HCT116 (cell line): ENCODE measurements at regions of chr20 and their contacts with region 1.

Region 1: DNA sequence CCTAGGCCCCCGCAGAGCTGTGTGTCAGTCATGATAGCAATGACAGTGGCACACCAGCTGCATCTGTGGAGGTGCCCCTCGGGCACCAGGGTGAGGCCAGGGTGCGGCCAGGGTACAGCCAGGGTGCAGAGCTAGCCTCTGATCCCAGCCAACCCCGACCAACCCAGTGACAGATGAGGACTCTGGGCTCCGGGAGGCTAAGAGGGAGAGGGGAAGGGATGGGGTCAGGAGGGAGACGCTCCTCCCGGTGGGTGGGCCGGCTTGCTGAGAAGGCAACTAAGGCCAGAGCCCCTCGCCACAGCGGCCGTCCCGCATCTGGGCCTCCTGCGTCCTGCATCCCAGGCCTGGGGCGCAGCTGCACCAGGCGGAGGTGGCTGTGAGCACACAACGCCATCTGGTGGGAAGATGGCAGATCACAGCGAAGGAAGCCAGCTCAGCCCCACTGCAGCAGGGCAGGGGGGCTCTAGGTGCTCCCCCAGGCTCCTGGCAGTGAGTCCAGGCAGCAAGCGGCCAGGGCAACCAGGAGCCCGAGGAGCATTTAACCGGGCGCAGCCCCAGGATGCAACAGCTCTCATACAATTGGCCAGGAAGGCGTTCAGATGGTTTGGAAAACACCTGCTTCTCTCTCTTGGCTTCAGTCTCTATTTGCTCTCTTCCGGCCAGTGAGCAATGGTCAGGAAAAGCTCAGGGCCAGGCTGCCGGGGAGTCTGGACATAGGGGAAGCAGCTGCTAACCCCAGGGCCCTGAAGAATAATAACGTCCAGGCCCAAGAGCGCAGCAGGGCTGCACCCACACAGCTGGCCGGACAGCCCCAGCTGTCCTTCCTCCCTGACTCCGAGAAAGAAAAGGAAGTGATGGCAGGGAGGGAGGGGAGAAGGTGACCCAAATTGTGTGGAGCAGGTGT is 169.4 kb downstream of the TAF4 start:
- DNase-seq: peak; percentile 12
- ATAC-seq: peak; percentile 97
- H3K4me3 ChIP-seq: no peak overlapping the region
- H3K27ac ChIP-seq: no peak overlapping the region
- H3K4me1 ChIP-seq: no peaks in the 10 kb centered on the region
- H3K27me3 ChIP-seq: peaks cover 5% of the 10 kb centered on the region; the same call in 1 of the 2 replicates
- CTCF ChIP-seq: peak; percentile 44 to 82 (median 80); a peak in 5 of 6 replicates
- POLR2A ChIP-seq: no peak
- RAD21 ChIP-seq: peak; percentile 69

Region 2: DNA sequence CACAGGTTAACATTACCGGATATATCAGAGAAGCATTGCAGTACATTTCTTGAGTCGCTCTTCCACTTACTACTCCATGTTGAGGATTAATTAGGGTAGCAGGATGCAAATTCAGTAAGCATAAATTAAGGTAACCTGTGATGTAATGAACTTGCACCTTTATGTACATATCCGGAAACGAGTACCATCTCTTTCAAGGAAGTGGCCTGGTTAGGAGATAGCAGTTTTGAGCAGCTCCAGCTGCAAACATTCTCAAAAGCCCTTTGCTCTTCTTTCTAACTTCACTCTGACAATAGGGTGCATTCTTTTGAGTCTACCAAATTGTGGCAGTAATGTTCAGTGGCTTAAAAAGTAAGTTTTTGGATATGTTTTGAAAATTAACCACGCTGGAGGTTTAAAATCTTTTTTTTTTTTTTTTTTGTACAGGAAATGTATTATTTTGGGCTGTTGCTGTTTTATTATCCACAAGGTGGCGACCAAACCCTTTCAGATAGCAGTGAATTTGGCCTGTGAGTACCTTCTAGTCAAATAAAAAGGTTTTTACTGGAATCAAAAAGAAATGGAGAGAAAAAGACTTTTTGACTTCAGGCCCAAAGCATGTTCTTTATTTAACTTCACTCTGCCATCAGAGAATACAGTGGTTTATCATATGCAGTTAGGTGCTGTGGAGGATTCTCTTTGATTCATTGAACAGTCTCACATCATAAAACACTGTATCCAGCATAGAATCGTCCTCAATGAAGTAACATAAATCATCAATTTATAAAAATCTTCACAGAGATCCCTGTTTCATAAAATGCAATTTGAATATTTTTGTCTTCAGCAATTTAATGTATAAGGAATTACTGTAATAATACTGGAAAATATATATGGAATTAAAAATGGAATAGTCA is 1947.2 kb before region 1 on chr20:
- CTCF ChIA-PET with region 1: interaction called, 3 read pairs
- POLR2A ChIA-PET with region 1: no interaction called
- RAD21 ChIA-PET with region 1: no interaction called
- intact Hi-C with region 1: loop called (anchors 5 kb)
- DNase-seq: peak; percentile 29
- ATAC-seq: no peak
- H3K4me3 ChIP-seq: no peak overlapping the region
- H3K27ac ChIP-seq: no peak overlapping the region
- H3K4me1 ChIP-seq: no peaks in the 10 kb centered on the region
- H3K27me3 ChIP-seq: no peaks in the 10 kb centered on the region
- CTCF ChIP-seq: peak; percentile 33 to 70 (median 52); a peak in 5 of 6 replicates
- POLR2A ChIP-seq: no peak
- RAD21 ChIP-seq: peak; percentile 60

Region 3: DNA sequence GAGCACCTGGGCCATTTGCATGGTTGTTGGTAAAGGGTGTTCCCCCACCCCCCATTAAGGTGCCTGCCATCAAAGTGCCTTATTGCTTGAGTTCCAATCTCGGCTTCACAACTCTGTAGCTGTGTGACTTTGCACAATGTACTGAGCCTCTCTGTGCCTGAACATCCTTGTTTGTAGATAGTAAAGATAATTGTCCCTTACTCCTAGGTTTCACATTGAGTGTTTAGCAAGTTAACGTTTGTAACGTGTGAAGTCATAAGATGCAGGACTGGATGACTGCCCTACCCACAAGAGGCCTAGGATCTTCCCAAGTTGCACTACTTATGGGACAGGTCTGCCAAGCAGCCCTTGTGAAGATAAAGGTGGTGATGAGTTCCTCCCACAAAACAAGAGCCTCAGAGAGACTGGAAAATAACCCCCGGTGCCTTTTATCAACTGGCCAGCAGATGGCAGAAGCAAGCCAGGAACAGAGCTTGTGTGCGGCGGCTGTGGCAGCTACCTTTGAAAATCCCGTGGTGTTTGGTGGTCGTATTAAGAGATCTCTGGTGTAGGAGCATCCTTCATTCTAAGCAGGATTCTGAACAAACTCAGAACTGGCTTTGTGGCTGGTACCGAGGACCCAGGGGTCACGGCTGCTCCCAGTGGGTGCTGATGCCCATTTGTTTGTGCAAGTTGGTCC is 1839.0 kb before region 1 on chr20:
- CTCF ChIA-PET with region 1: interaction called, 18 read pairs
- POLR2A ChIA-PET with region 1: no interaction called
- RAD21 ChIA-PET with region 1: interaction called in 1 of 2 experiments, 3 read pairs
- intact Hi-C with region 1: loop called (anchors 5 kb)
- DNase-seq: peak; percentile 36
- ATAC-seq: peak; percentile 82
- H3K4me3 ChIP-seq: no peak overlapping the region
- H3K27ac ChIP-seq: no peak overlapping the region
- H3K4me1 ChIP-seq: no peaks in the 10 kb centered on the region
- H3K27me3 ChIP-seq: peaks cover 17% of the 10 kb centered on the region
- CTCF ChIP-seq: peak; percentile 47 to 86 (median 81); a peak in 5 of 6 replicates
- POLR2A ChIP-seq: no peak
- RAD21 ChIP-seq: peak; percentile 71

Region 4: DNA sequence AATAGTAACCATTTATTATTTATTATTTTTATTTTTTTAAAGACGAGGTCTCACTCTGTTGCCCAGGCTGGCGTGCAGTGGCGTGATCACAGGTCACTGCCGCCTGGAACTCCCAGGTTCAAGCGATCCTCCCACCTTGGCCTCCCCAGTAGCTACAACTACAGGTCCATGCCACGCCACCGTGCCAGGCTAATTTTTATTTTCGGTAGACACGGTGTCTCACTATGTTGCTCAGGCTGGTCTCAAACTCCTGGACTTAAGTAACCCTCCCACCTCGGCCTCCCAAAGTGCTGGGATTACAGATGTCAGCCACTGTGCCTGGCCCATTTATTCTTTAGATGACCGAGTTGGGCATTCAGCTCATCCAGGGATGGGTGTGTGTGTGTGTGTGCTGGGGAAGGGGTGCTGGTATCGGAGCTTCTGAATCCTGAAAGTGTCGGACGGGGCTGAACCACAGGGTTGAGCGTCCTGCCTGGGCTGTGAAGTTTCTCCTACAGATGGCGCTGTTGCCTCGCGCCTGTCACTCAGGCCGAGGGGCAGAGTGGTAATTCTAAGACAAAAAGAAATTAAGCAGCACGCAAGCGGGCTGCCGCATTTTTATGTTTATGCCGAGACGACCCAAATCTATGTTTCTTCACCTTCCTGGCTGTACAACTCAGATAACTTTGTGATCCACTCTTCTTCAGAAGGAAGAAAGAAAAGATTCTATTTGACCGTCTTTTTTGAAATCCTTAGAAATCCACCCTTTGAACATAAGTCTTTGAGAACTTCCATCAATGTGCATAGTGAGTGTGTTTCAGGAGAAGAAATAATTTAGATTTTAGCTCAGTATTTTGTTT is 1685.3 kb before region 1 on chr20:
- CTCF ChIA-PET with region 1: interaction called, 5 read pairs
- POLR2A ChIA-PET with region 1: no interaction called
- RAD21 ChIA-PET with region 1: no interaction called
- intact Hi-C with region 1: loop called (anchors 2 kb)
- DNase-seq: peak; percentile 23
- ATAC-seq: peak; percentile 94
- H3K4me3 ChIP-seq: no peak overlapping the region
- H3K27ac ChIP-seq: no peak overlapping the region
- H3K4me1 ChIP-seq: no peaks in the 10 kb centered on the region
- H3K27me3 ChIP-seq: peaks cover 3% of the 10 kb centered on the region; the same call in 1 of the 2 replicates
- CTCF ChIP-seq: peak; percentile 34 to 83 (median 80); a peak in 5 of 6 replicates
- POLR2A ChIP-seq: no peak
- RAD21 ChIP-seq: peak; percentile 65